Stomach (tissue), 19 donors: ENCODE measurements at regions of chr14 and their contacts with region 1.

Region 1: GRCh38 chr14:24418492-24418873 is 11.0 kb downstream of the CBLN3 start:
- DNase-seq: peak in 1 of 2 donors; percentile 89
- H3K4me3 ChIP-seq: no peak overlapping the region
- H3K27ac ChIP-seq: peak overlapping the region in 4 of 5 donors; percentile 26 to 74 (median 50)
- H3K4me1 ChIP-seq: peaks cover 6 to 31% (median 18%) of the 10 kb centered on the region in 4 donors
- H3K27me3 ChIP-seq: no peaks in the 10 kb centered on the region
- CTCF ChIP-seq: no peak
- EP300 ChIP-seq: no peak
- POLR2A ChIP-seq: no peak

Region 2: GRCh38 chr14:24366721-24367513 is 51.6 kb before region 1 on chr14:
- intact Hi-C with region 1: loop called (anchors 5 kb)
- DNase-seq: peak; percentile 93 to 97
- H3K4me3 ChIP-seq: peak overlapping the region; percentile 58 to 71 (median 64)
- H3K27ac ChIP-seq: peak overlapping the region; percentile 81 to 97 (median 92)
- H3K4me1 ChIP-seq: peaks cover 31 to 60% (median 51%) of the 10 kb centered on the region in 4 donors
- H3K27me3 ChIP-seq: peaks cover 0 to 44% (median 0%) of the 10 kb centered on the region in 3 donors
- CTCF ChIP-seq: no peak
- EP300 ChIP-seq: peak; percentile 41
- POLR2A ChIP-seq: no peak

Region 3: GRCh38 chr14:24678801-24679247 is 260.3 kb after region 1 on chr14:
- intact Hi-C with region 1: no loop called
- DNase-seq: peak; percentile 76 to 95
- H3K4me3 ChIP-seq: peak overlapping the region; percentile 25 to 38 (median 33)
- H3K27ac ChIP-seq: peak overlapping the region in 1 of 5 donors; percentile 36
- H3K4me1 ChIP-seq: peaks cover 0 to 15% (median 7%) of the 10 kb centered on the region in 4 donors
- H3K27me3 ChIP-seq: no peaks in the 10 kb centered on the region
- CTCF ChIP-seq: peak in 5 of 7 experiments; percentile 81 to 94 (median 88)
- EP300 ChIP-seq: no peak
- POLR2A ChIP-seq: no peak